CD8-positive, alpha-beta memory T cell (primary cell): ENCODE measurements at regions of chr1 and their contacts with region 1.

Region 1: GRCh38 chr1:110766025-110766647 is 91.4 kb upstream of the KCNA3 start:
- DNase-seq: peak; percentile 24 to 72 (median 57)
- H3K4me3 ChIP-seq: no peak overlapping the region
- H3K4me3 Mint-ChIP-seq: no peak overlapping the region
- H3K27ac ChIP-seq: no peak overlapping the region
- H3K27ac Mint-ChIP-seq: peak overlapping the region in 1 of 8 donors; percentile 58
- H3K4me1 ChIP-seq: no peaks in the 10 kb centered on the region
- H3K4me1 Mint-ChIP-seq: peaks cover 4 to 6% (median 5%) of the 10 kb centered on the region in 3 donors
- H3K27me3 ChIP-seq: no peaks in the 10 kb centered on the region
- H3K27me3 Mint-ChIP-seq: peaks cover 4 to 30% of the 10 kb centered on the region in 2 donors

Region 2: DNA sequence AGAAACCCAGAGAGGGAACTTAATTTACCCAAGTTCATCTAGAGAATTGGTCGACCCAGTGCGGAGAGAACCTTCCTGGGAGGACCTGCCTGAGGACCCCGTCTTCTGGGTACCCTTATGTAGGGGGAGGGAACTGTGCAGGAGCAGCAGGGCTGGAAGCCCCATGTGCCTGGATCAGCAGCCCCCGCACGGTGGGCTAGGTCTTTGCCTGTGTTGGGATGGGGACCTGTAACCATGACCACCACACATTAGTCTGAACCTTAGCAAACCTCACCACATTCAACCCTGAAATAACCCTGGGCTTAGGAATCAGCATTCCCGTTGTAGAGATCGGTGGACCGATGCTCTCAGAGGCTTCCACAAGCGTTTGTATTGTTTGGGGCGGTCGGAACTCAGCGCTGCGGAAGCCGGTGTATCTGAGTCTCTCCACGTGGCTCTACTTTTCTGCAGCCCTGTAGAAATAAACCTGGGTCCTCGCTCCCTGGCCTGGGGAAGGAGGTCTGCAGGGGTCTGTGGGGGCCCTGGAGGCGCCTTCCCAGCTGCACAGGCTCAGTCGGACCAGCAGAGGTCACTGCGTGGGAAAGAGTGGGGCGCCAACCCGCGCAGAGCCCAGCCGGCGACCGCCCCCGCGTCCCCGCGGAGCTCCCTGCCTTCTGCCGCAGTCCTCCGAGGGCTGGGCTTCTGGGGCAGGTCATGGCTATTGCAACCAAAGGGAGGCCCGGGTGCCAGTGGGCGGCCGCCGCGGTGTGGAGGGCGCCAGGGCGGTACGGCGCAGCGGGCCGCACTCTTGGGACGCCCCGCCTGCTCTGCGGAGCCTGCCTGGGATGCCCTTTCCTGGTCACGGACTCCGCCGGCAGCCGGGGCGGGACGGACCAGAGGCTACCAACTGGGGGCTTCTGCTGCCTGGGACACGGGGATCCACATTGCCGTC is 211.0 kb before region 1 on chr1:
- CTCF ChIA-PET with region 1: interaction called, 15 read pairs
- POLR2A ChIA-PET with region 1: no interaction called
- DNase-seq: peak; percentile 23 to 61 (median 41)
- H3K4me3 ChIP-seq: no peak overlapping the region
- H3K4me3 Mint-ChIP-seq: peak overlapping the region in 5 of 7 donors; percentile 15 to 57 (median 44)
- H3K27ac ChIP-seq: no peak overlapping the region
- H3K27ac Mint-ChIP-seq: no peak overlapping the region
- H3K4me1 ChIP-seq: no peaks in the 10 kb centered on the region
- H3K4me1 Mint-ChIP-seq: peaks cover 0 to 4% (median 2%) of the 10 kb centered on the region in 3 donors
- H3K27me3 ChIP-seq: peaks cover 23% of the 10 kb centered on the region
- H3K27me3 Mint-ChIP-seq: peaks cover 28 to 66% of the 10 kb centered on the region in 2 donors

Region 3: DNA sequence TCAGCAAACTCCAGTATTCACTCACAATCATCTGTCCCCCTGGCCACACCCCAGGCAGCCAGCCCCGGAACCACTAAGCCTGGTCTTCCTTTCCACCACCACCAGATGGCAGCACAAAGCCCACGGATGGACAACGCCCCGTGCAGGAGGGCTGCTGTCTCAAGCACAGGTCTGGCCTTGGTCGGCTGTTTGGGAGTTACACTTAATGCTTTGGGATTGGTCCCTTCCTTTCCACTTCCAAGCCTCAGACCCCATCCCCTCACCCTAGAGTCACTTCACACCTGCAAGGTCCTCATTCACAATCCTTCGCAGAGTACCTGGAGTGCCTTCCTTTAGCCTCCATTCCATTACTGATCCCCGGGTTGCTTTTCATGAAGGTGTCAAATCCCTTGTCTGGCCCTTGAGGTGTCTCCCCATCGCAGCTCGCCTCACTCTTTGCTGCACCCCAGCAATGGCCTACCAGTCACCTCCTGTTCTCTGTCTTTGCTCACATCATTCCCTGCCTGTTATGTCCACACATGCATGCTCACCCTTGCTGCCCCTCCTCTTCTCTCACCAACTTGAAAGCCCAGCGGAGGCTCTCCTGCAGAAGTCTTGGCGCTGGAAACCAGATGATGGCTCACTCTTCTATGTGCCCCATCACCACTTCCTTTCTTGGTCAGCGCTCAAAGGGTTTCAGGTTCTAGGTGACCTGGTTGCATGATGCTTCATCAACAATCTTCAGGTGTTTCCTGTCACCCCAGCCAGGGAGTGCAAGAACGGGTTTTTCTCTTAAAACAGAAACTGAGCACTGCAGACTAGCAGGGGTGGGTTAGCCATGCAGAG is 135.1 kb before region 1 on chr1:
- CTCF ChIA-PET with region 1: interaction called, 46 read pairs
- POLR2A ChIA-PET with region 1: no interaction called
- DNase-seq: peak; percentile 76 to 89 (median 83)
- H3K4me3 ChIP-seq: peak overlapping the region; percentile 45
- H3K4me3 Mint-ChIP-seq: no peak overlapping the region
- H3K27ac ChIP-seq: peak overlapping the region; percentile 22
- H3K27ac Mint-ChIP-seq: no peak overlapping the region
- H3K4me1 ChIP-seq: peaks cover 59% of the 10 kb centered on the region
- H3K4me1 Mint-ChIP-seq: peaks cover 34 to 66% (median 40%) of the 10 kb centered on the region in 3 donors
- H3K27me3 ChIP-seq: no peaks in the 10 kb centered on the region
- H3K27me3 Mint-ChIP-seq: no peaks in the 10 kb centered on the region

Region 4: GRCh38 chr1:110674337-110675059 is 91.6 kb before region 1 on chr1 and contains the start of gene KCNA3:
- CTCF ChIA-PET with region 1: interaction called, 22 read pairs
- POLR2A ChIA-PET with region 1: interaction called, 6 read pairs
- DNase-seq: peak; percentile 70 to 87 (median 73)
- H3K4me3 ChIP-seq: peak within 1 kb of the TSS; percentile 90
- H3K4me3 Mint-ChIP-seq: peak within 1 kb of the TSS; percentile 96 to 100 (median 100)
- H3K27ac ChIP-seq: peak within 1 kb of the TSS; percentile 98
- H3K27ac Mint-ChIP-seq: peak within 1 kb of the TSS; percentile 93 to 100 (median 100)
- H3K4me1 ChIP-seq: peaks cover 24% of the 10 kb centered on the region
- H3K4me1 Mint-ChIP-seq: peaks cover 33 to 60% (median 43%) of the 10 kb centered on the region in 3 donors
- H3K27me3 ChIP-seq: no peaks in the 10 kb centered on the region
- H3K27me3 Mint-ChIP-seq: peaks cover 0 to 11% of the 10 kb centered on the region in 2 donors
- total RNA-seq, gene KCNA3: 38.4 to 40.5 TPM

Region 5: DNA sequence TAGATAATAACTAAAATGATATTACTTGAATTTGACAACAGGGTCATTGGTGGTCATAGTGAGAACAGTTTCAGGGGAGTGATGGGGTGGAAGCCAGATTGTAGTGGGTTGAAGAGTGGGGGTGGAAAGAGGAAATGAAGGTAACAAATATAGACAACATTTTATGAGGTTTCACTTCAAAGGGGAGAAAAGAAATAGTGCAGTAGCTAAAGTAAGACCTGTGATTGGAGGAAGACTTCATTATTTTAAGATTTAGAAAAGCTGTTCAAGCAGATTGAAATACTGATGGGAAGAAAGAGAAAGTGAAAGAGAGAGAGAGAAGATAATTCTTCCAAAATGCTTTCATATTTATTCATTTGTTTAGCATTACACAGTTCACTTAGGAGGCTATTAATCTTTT is 39.4 kb before region 1 on chr1:
- CTCF ChIA-PET with region 1: interaction called, 11 read pairs
- POLR2A ChIA-PET with region 1: no interaction called
- DNase-seq: peak in 2 of 5 donors; percentile 12 to 33
- H3K4me3 ChIP-seq: peak overlapping the region; percentile 13
- H3K4me3 Mint-ChIP-seq: peak overlapping the region; percentile 21 to 75 (median 67)
- H3K27ac ChIP-seq: no peak overlapping the region
- H3K27ac Mint-ChIP-seq: peak overlapping the region; percentile 55 to 89 (median 70)
- H3K4me1 ChIP-seq: peaks cover 25% of the 10 kb centered on the region
- H3K4me1 Mint-ChIP-seq: peaks cover 27 to 36% (median 34%) of the 10 kb centered on the region in 3 donors
- H3K27me3 ChIP-seq: peaks cover under 1% of the 10 kb centered on the region
- H3K27me3 Mint-ChIP-seq: no peaks in the 10 kb centered on the region

Region 6: DNA sequence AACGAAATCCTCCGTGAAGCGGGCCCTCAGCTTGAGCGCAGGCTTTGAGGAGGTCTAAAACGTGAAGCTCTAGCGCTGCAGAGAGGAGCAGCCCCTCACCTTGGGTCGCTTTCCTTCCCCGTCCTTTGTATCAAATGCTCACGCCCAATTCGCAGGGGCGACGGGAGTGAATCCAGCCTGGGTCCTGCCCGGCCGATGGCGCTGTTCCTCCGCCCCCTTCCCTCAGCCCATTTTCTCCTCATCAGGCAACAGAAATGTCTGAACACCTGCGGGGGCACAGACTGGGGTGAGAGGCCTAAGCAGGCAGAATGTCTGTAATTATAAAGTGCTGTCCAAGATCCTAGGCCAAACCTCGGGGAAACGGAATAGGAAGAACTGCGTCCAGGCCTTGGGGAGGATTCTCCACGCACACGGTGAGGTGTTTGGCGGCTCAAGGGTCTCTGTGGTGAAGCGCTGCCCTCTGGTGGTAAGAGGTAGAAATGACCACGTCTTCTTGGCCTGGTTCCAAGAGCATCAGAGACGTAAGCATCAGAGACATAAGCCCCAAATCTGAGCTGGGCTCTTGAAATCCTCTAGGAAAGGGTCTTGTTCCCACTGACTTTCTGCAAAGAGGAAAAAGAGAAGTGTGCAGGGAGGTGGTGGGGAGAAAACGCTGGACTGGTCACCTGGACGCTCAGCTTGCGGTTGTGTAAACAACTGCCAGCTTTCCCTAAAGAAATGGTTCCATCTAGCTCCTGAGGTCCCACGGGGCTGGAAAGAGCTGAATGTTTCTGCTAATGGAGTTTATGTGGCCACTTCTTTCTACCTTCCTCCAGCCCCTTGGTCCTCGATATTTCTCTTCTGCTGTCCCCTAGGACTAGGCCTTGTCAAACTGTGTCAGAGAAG is 14.7 kb after region 1 on chr1:
- CTCF ChIA-PET with region 1: interaction called, 61 read pairs
- POLR2A ChIA-PET with region 1: no interaction called
- DNase-seq: peak; percentile 44 to 81 (median 72)
- H3K4me3 ChIP-seq: no peak overlapping the region
- H3K4me3 Mint-ChIP-seq: peak overlapping the region in 4 of 7 donors; percentile 12 to 38 (median 22)
- H3K27ac ChIP-seq: no peak overlapping the region
- H3K27ac Mint-ChIP-seq: peak overlapping the region in 3 of 8 donors; percentile 17 to 45 (median 32)
- H3K4me1 ChIP-seq: peaks cover 39% of the 10 kb centered on the region
- H3K4me1 Mint-ChIP-seq: peaks cover 36 to 41% (median 39%) of the 10 kb centered on the region in 3 donors
- H3K27me3 ChIP-seq: no peaks in the 10 kb centered on the region
- H3K27me3 Mint-ChIP-seq: peaks cover 4% of the 10 kb centered on the region in 2 donors

Region 7: GRCh38 chr1:110787328-110788071 is 21.4 kb after region 1 on chr1:
- CTCF ChIA-PET with region 1: interaction called, 61 read pairs
- POLR2A ChIA-PET with region 1: no interaction called
- DNase-seq: peak in 4 of 5 donors; percentile 28 to 77 (median 70)
- H3K4me3 ChIP-seq: peak overlapping the region; percentile 35
- H3K4me3 Mint-ChIP-seq: peak overlapping the region; percentile 66 to 79 (median 72)
- H3K27ac ChIP-seq: no peak overlapping the region
- H3K27ac Mint-ChIP-seq: peak overlapping the region; percentile 70 to 93 (median 80)
- H3K4me1 ChIP-seq: peaks cover 63% of the 10 kb centered on the region
- H3K4me1 Mint-ChIP-seq: peaks cover 65 to 68% (median 68%) of the 10 kb centered on the region in 3 donors
- H3K27me3 ChIP-seq: no peaks in the 10 kb centered on the region
- H3K27me3 Mint-ChIP-seq: no peaks in the 10 kb centered on the region

Region 8: DNA sequence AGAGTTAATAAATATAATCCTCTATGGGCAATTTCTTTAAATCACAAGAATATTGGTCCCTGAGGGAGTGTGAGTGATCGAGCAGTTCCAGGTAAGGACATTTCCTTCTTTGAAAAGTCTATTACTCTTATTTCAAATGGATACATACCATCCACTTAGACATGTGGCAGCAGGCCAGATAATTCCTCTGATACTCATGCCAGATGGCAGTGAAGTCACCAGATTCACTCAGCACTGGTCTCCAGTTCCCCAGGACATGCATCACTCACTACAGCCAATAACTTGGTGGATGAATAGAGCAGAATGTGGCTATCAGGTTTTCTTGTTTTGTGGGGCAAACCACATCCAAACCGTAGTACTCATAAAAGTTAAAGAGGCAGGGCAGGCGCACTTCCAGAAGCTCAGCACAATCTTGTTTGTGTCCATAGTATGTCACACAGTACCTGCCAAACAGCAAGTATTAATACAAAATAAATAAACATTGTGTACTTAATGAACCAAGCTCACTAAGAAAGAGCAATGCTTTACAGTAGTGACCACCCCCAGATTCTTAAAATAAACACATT is 32.6 kb after region 1 on chr1:
- CTCF ChIA-PET with region 1: no interaction called
- POLR2A ChIA-PET with region 1: no interaction called
- DNase-seq: no peak
- H3K4me3 ChIP-seq: no peak overlapping the region
- H3K4me3 Mint-ChIP-seq: no peak overlapping the region
- H3K27ac ChIP-seq: no peak overlapping the region
- H3K27ac Mint-ChIP-seq: no peak overlapping the region
- H3K4me1 ChIP-seq: no peaks in the 10 kb centered on the region
- H3K4me1 Mint-ChIP-seq: peaks cover 0 to 3% (median 2%) of the 10 kb centered on the region in 3 donors
- H3K27me3 ChIP-seq: no peaks in the 10 kb centered on the region
- H3K27me3 Mint-ChIP-seq: peaks cover 0 to 5% of the 10 kb centered on the region in 2 donors

Region 9: DNA sequence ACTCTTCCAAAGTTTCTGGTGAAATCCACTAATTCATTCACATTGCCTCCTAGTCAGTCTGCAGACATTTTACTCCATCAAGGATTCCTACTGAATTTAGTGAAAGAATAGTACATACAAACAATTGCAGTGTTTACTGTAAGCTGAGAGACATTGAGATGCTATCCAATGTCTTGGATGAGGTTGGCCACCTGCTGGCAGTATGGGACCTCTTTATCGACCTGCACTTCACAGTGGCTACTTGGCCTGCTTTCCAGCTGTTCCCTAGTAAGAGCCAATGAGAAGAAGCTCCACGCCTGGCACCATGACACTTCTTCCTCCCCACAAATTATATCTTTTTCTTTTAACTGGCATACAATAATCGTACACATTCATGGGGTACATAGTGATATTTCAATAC is 249.1 kb after region 1 on chr1:
- CTCF ChIA-PET with region 1: no interaction called
- POLR2A ChIA-PET with region 1: no interaction called
- DNase-seq: no peak
- H3K4me3 ChIP-seq: no peak overlapping the region
- H3K4me3 Mint-ChIP-seq: no peak overlapping the region
- H3K27ac ChIP-seq: no peak overlapping the region
- H3K27ac Mint-ChIP-seq: no peak overlapping the region
- H3K4me1 ChIP-seq: no peaks in the 10 kb centered on the region
- H3K4me1 Mint-ChIP-seq: no peaks in the 10 kb centered on the region
- H3K27me3 ChIP-seq: peaks cover 9% of the 10 kb centered on the region
- H3K27me3 Mint-ChIP-seq: peaks cover 32 to 57% of the 10 kb centered on the region in 2 donors